Posterior vena cava (tissue), 2 donors: ENCODE measurements at regions of chr2 and their contacts with region 1.

Region 1: GRCh38 chr2:174465327-174465726 is 21.5 kb downstream of the GPR155 start:
- DNase-seq: no peak

Region 2: GRCh38 chr2:174522553-174522952 is 57.2 kb after region 1 on chr2:
- intact Hi-C with region 1: loop called in 1 of 2 experiments (anchors 10 kb)
- DNase-seq: no peak

Region 3: GRCh38 chr2:174682578-174683391 is 217.5 kb after region 1 on chr2:
- intact Hi-C with region 1: loop called in 1 of 2 experiments (anchors 5 kb)
- DNase-seq: peak; percentile 91

Region 4: DNA sequence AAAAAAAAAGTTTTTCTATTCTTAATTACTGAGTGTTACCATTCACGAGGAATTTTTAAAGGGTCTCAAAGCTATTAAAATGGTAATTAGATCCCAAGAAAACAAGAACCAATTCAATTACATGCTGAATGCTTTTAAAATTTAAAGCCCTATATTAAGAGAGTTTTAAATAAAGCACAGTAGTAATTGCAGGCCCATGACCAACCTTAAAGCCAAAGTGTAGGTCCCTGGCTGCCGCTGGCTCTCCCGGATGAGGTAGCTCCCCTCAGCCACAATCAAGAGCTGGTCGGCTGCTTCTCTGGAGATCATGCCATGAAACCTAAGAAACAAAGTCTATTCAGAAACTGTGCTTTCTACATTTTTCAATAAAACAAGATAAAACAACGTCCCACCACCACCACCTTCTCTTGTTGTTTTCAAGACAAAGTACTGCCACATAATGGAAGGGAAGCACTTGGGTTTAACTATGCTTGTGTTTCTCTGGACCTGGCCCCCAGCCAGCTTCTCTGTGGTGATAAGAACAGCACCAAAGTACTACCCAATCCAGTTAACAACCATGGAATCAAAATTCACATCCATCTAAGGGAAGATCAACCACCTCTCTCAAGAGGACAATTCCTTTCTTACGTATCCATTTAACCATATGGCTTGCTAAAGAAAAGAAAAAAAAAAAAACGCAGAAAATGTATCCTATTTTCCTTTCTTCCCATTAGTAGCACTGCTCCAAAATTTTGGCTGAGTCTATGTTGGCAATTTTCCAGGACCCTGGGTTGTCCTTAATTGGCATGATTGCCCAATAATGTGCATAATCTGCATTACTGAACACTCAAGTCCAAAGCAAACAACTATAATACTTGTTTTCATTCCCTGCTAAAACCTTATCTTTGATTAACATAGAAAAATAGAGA is 449.8 kb after region 1 on chr2:
- intact Hi-C with region 1: loop called in 1 of 2 experiments (anchors 5 kb)
- DNase-seq: peak; percentile 62